ENCODE measurements at regions of chr7 and their contacts with region 1.

Region 1: DNA sequence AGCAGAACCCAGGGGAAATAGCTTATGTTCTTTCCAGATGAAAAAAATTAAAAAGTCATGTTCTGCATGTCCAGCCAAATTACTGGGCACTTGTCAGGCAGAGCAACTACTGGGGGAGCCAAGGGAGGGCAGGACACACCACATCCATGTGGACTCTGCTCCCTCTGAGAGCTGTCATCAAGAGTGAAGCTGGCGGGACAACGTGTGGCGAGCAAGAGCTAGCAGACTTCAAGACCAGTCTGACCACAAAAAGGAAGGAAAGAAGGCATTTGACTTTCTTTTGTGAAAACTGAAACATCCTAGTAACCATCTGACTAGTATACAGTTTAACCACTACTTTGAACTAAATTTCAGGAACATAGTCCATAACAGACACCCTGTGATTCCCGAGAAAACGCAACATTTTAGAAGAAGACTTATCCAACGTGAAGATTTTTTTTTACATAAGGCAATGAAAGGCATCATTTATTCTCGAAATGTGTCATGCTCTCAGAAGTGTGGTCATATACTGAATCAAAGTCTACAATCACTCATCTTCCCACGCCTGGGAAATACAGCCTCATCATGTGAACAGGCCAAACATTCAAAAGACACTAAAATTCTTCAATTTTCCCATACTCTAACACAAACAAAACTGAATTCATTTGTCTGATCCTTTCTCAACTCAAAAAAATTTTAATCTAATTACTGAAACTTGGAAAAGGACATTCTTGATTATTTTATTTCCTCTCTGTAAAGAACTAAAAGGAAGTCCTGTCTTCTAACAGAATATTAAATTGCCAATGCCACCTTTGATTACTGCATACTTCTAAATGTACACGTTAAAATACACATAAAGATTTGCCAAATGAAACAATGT is 15.5 kb downstream of the CYTH3 start:
- DNase-seq: peak in 1 of 2 donors; percentile 74
- ATAC-seq: peak; percentile 66
- H3K4me3 ChIP-seq: peak overlapping the region in 1 of 2 donors; percentile 53
- H3K27ac ChIP-seq: peak overlapping the region in 1 of 2 donors; percentile 83
- H3K4me1 ChIP-seq: peaks cover 10 to 18% of the 10 kb centered on the region in 2 donors
- H3K27me3 ChIP-seq: no peaks in the 10 kb centered on the region

Region 2: DNA sequence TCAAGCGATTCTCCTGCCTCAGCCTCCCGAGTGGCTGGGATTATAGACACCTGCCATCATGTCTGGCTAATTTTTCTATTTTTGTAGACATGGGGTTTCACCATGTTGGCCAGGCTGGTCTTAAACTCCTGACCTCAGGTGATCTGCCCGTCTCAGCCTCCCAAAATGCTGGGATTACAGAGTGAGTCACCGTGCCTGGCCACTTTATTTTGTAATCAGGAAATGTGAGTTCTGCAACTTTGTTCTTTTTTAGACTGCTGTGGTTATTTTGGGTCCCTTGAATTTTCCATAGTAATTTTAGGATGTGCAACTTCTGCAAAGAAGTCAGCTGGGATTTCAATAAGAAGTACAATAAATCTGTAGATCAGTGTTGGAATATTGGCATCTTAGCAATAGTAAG is 81.3 kb before region 1 on chr7:
- intact Hi-C with region 1: loop called in 1 of 2 experiments (anchors 5 kb)
- DNase-seq: peak in 1 of 2 donors; percentile 67
- ATAC-seq: no peak
- H3K4me3 ChIP-seq: no peak overlapping the region
- H3K27ac ChIP-seq: no peak overlapping the region
- H3K4me1 ChIP-seq: peaks cover 4 to 5% of the 10 kb centered on the region in 2 donors
- H3K27me3 ChIP-seq: no peaks in the 10 kb centered on the region

Region 3: DNA sequence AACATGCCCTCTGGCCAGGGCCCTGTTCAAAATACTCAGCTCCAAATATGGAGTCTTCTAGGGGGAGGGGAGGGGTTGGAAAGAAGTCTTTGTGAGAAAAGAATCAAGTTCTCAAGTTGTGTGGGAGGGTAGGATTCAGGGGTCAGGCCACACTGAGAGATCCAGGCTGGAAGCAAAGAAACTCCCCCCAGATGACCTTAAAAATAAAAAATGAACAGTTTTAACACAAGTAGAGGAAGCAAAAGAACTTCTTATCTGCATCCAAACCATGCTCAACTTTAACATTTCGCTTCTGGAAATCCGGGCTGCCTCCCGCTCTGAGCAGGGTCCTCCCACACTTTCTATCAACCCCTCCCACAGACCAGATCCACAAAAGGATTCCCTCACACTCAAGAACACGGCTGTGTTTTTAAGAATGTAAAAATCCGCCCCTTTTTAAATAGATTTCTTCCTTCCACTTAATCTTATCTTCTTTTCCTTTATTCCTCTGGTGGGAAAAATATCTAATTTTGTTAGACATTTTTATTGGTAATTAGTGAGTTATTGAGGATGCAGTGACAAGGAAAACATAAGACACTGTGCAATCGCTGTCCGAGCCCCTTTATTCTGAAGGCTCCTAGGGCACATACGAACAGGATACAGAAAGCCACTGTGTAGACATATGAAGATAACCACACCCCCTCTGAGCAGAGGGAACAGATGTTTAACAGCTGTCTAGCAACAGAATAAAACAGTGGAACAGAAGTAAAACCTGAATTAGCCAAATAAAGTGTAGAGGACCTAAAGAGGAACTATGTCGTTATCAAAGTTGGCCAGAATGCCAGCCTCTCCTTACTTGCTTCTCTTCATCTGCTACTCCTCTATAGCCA is 28.3 kb before region 1 on chr7:
- intact Hi-C with region 1: loop called in 1 of 2 experiments (anchors 5 kb)
- DNase-seq: no peak
- ATAC-seq: peak; percentile 55
- H3K4me3 ChIP-seq: no peak overlapping the region
- H3K27ac ChIP-seq: no peak overlapping the region
- H3K4me1 ChIP-seq: peaks cover 3 to 5% of the 10 kb centered on the region in 2 donors
- H3K27me3 ChIP-seq: no peaks in the 10 kb centered on the region

Region 4: GRCh38 chr7:6317797-6318438 is 61.0 kb after region 1 on chr7:
- intact Hi-C with region 1: loop called (anchors 5 to 10 kb)
- DNase-seq: peak; percentile 84 to 92
- ATAC-seq: peak; percentile 85
- H3K4me3 ChIP-seq: no peak overlapping the region
- H3K27ac ChIP-seq: peak overlapping the region; percentile 74 to 86
- H3K4me1 ChIP-seq: no peaks in the 10 kb centered on the region
- H3K27me3 ChIP-seq: no peaks in the 10 kb centered on the region

Region 5: DNA sequence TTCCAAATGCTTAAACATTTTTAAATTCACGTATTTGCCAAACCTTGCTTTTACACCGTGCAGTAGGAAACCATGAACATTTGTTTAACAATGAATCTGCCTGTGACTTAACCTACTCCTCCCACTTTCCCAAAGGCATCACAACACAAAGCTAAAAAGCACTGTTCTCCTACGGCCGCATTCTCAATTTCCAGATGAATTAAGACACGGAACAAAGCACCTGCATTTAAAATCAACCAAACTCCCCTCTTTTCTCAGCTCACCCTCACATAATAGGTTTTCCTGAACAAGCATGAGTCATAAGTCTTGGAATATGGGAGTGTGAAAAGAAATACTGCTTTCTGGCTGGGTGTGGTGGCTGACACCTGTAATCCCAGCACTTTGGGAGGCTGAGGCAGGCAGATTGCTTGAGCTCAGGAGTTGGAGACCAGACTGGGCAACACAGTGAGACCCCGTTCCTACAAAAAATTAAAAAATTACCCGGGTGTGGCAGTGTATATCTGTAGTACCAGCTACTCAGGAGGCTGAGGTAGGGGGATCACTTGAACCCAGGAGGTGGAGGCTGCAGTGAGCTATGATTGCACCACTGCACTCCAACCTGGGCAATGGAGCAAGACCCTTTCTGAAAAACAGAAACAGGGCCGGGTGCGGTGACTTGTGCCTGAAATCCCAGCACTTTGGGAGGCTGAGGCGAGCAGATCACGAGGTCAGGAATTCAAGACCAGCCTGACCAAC is 67.2 kb after region 1 on chr7:
- intact Hi-C with region 1: loop called (anchors 5 to 10 kb)
- DNase-seq: peak in 1 of 2 donors; percentile 12
- ATAC-seq: no peak
- H3K4me3 ChIP-seq: no peak overlapping the region
- H3K27ac ChIP-seq: no peak overlapping the region
- H3K4me1 ChIP-seq: no peaks in the 10 kb centered on the region
- H3K27me3 ChIP-seq: no peaks in the 10 kb centered on the region

Measured in aorta (tissue), 5 donors.